ENCODE measurements at regions of chr20 and their contacts with region 1.

Region 1: GRCh38 chr20:52342913-52343312 is 151.3 kb upstream of the ZFP64 start:
- DNase-seq: peak in 1 of 2 donors; percentile 41
- ATAC-seq: no peak
- H3K4me3 ChIP-seq: no peak overlapping the region
- H3K4me3 Mint-ChIP-seq: no peak overlapping the region
- H3K27ac ChIP-seq: no peak overlapping the region
- H3K27ac Mint-ChIP-seq: no peak overlapping the region
- H3K4me1 ChIP-seq: no peaks in the 10 kb centered on the region
- H3K4me1 Mint-ChIP-seq: no peaks in the 10 kb centered on the region
- H3K27me3 ChIP-seq: no peaks in the 10 kb centered on the region
- H3K27me3 Mint-ChIP-seq: peaks cover 16 to 35% of the 10 kb centered on the region in 2 donors
- CTCF ChIP-seq: no peak

Region 2: GRCh38 chr20:52191916-52192718 is 150.8 kb before region 1 on chr20:
- intact Hi-C with region 1: no loop called
- DNase-seq: peak in 1 of 2 donors; percentile 74
- ATAC-seq: peak; percentile 32 to 45 (median 39)
- H3K4me3 ChIP-seq: peak overlapping the region; percentile 91
- H3K4me3 Mint-ChIP-seq: peak overlapping the region; percentile 94
- H3K27ac ChIP-seq: peak overlapping the region; percentile 67
- H3K27ac Mint-ChIP-seq: peak overlapping the region; percentile 74 to 90
- H3K4me1 ChIP-seq: peaks cover 14% of the 10 kb centered on the region
- H3K4me1 Mint-ChIP-seq: peaks cover 16 to 21% of the 10 kb centered on the region in 2 donors
- H3K27me3 ChIP-seq: no peaks in the 10 kb centered on the region
- H3K27me3 Mint-ChIP-seq: no peaks in the 10 kb centered on the region
- CTCF ChIP-seq: no peak

Region 3: GRCh38 chr20:52361650-52362049 is 18.7 kb after region 1 on chr20:
- intact Hi-C with region 1: loop called (anchors 2 kb)
- DNase-seq: no peak
- ATAC-seq: no peak
- H3K4me3 ChIP-seq: no peak overlapping the region
- H3K4me3 Mint-ChIP-seq: no peak overlapping the region
- H3K27ac ChIP-seq: no peak overlapping the region
- H3K27ac Mint-ChIP-seq: no peak overlapping the region
- H3K4me1 ChIP-seq: no peaks in the 10 kb centered on the region
- H3K4me1 Mint-ChIP-seq: no peaks in the 10 kb centered on the region
- H3K27me3 ChIP-seq: peaks cover 3% of the 10 kb centered on the region
- H3K27me3 Mint-ChIP-seq: peaks cover 27 to 59% of the 10 kb centered on the region in 2 donors
- CTCF ChIP-seq: no peak